Activated T-helper 1 cell treated with anti-CD3 and anti-CD28 coated beads, Interleukin-12 subunit alpha, Interleukin-12 subunit beta, Interleukin-2, Interleukin-4 antibody, amounts not matched to agents 30 ng/mL and 10 ng/mL and 1 ng/mL, durations not matched to agents 14 hours and 24 hours and 36 hours (primary cell): ENCODE measurements at regions of chr14 and their contacts with region 1.

Region 1: DNA sequence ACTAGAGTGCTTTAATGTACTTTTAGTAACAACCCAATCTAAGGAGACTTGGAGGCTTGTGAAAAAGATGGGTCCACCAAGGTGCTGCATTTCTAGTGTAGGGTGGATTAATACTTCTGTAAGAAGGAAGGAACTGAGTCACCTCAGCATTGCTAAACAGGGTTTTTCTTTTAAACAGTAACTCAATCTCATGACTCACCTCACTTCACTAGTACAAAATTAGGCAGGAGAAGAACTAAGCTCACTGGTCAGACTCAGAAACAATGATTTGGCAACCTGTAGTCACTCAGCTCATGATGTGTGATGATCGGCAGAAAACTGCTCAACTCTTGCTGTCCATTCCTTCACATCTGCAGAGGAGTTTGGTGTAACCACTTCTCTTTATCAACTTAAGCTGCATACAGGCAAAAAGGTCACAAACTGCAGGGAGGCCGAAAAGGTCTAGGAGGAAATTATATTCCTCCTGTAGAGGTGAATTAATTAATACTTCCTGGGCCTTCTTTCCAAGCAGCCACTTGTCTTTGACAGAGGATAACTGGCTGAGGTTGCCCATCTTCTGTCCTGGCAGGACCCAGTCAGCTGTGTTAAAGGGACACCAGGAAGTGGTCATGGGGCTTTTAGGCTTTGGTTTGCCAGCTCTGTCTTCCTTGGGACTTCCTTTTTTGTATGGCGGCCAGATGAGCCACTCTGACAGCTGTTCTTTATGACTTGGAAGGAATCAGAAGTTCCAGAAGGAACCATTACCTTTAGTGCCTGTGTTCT is 466.9 kb downstream of the FUT8 start:
- DNase-seq: no peak
- H3K4me3 Mint-ChIP-seq: no peak overlapping the region
- H3K27ac Mint-ChIP-seq: peak overlapping the region; percentile 18
- H3K4me1 Mint-ChIP-seq: peaks cover 5% of the 10 kb centered on the region
- H3K27me3 Mint-ChIP-seq: no peaks in the 10 kb centered on the region

Region 2: DNA sequence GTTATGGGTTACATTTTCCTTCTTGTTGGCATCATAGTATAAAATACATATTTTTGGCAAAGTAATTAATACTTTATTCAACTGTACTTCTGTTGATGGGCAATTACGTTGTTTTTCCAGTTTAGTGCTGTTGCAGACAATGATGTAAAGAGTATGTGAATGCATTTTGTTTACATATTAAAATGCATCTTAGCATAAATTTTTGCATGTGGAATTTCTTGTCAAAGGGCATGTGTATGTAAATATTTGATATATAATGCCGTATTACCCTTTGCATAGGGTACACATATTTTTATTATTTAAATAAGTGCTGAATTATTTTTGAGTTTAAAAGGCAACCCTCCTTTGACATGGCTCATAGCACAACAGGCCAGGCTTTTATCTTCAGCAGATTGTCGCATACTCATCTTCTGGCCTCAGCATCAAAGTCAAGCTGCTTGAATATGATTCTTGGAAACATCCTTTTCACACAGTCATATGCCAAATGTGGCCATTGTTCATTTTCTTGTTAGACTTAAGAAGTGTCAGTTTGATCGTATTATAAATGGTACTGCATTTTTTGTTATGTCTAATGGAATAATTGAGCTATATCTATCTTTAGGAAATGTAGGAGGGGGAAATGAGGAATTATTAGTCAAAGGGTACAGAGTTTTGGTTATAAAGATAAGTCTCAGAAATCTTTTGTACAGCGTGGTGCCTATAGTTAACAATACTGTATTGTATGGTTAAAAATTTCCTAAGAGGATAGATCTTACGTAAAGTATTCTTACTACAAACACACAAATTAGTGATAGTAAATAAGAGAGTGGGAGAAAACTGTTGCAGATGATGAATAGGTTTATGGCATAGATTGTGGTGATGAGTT is 328.4 kb before region 1 on chr14:
- intact Hi-C with region 1: no loop called
- DNase-seq: no peak
- H3K4me3 Mint-ChIP-seq: no peak overlapping the region
- H3K27ac Mint-ChIP-seq: peak overlapping the region; percentile 0
- H3K4me1 Mint-ChIP-seq: peaks cover 14% of the 10 kb centered on the region
- H3K27me3 Mint-ChIP-seq: no peaks in the 10 kb centered on the region

Region 3: DNA sequence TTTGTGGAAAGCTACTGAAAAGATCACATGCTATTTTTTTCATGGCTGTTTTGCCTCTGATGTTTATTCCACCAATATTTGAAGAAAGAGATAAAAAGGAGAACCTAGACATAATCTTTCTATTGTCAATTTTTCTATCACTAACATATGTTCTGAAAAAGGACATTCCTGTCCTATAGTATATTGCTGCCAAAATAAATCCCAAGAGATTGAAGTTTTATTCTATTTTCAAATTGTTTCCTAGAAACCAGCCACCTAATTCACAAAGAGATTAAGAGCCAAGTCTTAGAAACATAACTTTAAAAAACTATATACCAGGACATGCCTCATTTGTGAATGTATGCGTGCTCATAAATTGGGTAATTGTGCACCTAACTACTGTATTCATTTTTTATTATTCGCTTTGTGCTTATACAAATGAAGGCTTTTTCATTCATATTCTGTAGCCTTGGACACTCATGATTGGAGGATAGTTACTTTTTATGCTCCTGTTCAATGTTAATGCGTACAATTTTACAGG is 266.2 kb before region 1 on chr14:
- intact Hi-C with region 1: no loop called
- DNase-seq: no peak
- H3K4me3 Mint-ChIP-seq: no peak overlapping the region
- H3K27ac Mint-ChIP-seq: no peak overlapping the region
- H3K4me1 Mint-ChIP-seq: peaks cover 12% of the 10 kb centered on the region
- H3K27me3 Mint-ChIP-seq: no peaks in the 10 kb centered on the region

Region 4: DNA sequence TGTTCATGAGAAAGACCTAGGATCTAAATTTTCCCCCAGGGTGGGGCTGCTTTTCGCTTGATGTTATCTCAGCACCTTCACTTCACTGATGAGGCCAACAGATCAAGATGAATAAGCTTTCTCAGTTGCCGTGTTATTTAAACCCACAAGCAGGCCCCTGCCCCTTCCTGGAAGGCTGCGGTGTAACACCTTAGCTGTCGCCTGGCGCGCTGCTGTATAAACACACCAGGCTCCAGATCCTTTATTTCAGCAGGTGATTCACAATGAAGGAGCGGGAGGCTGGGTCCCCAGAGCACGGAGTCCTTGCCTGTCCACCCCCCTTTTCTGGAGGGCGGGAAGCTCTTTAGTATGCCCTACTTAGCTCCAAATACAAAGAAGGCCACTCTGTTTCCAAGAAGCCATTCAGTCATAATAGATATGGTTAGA is 48.5 kb after region 1 on chr14:
- intact Hi-C with region 1: loop called (anchors 5 kb)
- DNase-seq: peak; percentile 82
- H3K4me3 Mint-ChIP-seq: peak overlapping the region; percentile 50
- H3K27ac Mint-ChIP-seq: peak overlapping the region; percentile 86
- H3K4me1 Mint-ChIP-seq: peaks cover 60% of the 10 kb centered on the region
- H3K27me3 Mint-ChIP-seq: peaks cover 4% of the 10 kb centered on the region